RWPE1 (cell line): ENCODE measurements at regions of chr2 and their contacts with region 1.

Region 1: GRCh38 chr2:9799665-9800632 is 43.3 kb upstream of the TAF1B start:
- DNase-seq: peak; percentile 83
- H3K27ac ChIP-seq: peak overlapping the region; percentile 100
- CTCF ChIP-seq: peak; percentile 97

Region 2: GRCh38 chr2:9508931-9509330 is 291.0 kb before region 1 on chr2:
- CTCF ChIA-PET with region 1: no interaction called
- POLR2A ChIA-PET with region 1: no interaction called
- DNase-seq: no peak
- H3K27ac ChIP-seq: no peak overlapping the region
- CTCF ChIP-seq: no peak

Region 3: GRCh38 chr2:9843229-9844035 is 43.5 kb after region 1 on chr2 and contains the start of gene TAF1B:
- CTCF ChIA-PET with region 1: interaction called, 23 read pairs
- POLR2A ChIA-PET with region 1: interaction called, 10 read pairs
- DNase-seq: peak; percentile 94
- H3K27ac ChIP-seq: peak within 1 kb of the TSS; percentile 95
- CTCF ChIP-seq: peak; percentile 63

Region 4: DNA sequence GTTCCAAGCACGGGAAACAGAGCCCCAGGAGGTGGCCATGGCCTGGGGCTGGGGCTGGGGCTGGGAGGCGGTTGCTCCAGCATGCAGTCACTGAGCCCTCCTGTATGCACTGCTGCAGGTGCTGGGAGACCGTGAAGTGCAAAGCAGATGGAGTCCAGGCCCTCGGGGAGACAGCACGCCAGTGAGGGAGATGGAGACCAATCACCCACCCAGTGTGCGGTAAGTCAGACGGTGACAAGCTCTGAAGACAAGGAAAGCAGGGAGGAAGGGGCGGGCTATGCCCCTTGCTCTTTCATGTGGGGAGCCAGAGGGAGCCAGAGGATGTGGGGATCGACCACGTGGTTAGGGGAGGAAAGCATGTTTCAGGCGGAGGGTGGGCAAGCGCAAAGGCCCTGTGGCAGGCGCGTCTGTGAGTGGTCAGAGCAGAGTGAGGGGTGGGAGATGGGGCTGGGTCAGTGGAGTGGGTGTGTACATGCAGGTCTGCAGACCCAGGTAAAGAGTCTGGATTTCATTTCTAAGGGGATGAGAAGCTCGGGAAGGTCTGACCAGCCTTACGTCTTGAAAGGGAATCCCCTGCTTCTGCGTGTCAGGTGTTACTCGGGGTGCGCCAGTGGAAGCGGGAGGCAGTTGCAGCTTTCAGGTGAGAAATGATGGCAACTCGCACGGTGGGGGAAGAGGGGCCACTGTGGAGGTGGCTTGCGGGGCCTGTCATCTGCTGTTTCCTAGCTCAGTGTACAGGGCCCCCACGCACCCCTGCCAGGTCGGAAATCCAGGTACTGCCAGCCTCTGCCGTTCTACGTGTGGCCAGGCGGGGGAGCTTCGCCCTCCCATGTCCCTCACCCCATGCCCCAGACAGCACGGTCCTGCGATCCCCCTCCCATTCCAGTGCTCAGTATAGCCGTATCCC is 342.0 kb after region 1 on chr2:
- CTCF ChIA-PET with region 1: no interaction called
- POLR2A ChIA-PET with region 1: no interaction called
- DNase-seq: no peak
- H3K27ac ChIP-seq: peak overlapping the region; percentile 23; the same call in 1 of the 2 replicates
- CTCF ChIP-seq: peak; percentile 51